ENCODE measurements at regions of chr3 and their contacts with region 1.

Region 1: GRCh38 chr3:196073188-196073838 is 8.6 kb downstream of the TFRC start:
- DNase-seq: peak; percentile 78
- H3K4me3 Mint-ChIP-seq: no peak overlapping the region
- H3K27ac Mint-ChIP-seq: no peak overlapping the region
- H3K4me1 Mint-ChIP-seq: peaks cover 10% of the 10 kb centered on the region
- H3K27me3 Mint-ChIP-seq: no peaks in the 10 kb centered on the region
- CTCF ChIP-seq: peak; percentile 65

Region 2: GRCh38 chr3:195859061-195859845 is 214.1 kb before region 1 on chr3:
- CTCF ChIA-PET with region 1: no interaction called
- POLR2A ChIA-PET with region 1: no interaction called
- intact Hi-C with region 1: no loop called
- DNase-seq: peak; percentile 75
- H3K4me3 Mint-ChIP-seq: no peak overlapping the region
- H3K27ac Mint-ChIP-seq: no peak overlapping the region
- H3K4me1 Mint-ChIP-seq: peaks cover 14% of the 10 kb centered on the region
- H3K27me3 Mint-ChIP-seq: no peaks in the 10 kb centered on the region
- CTCF ChIP-seq: peak; percentile 92

Region 3: DNA sequence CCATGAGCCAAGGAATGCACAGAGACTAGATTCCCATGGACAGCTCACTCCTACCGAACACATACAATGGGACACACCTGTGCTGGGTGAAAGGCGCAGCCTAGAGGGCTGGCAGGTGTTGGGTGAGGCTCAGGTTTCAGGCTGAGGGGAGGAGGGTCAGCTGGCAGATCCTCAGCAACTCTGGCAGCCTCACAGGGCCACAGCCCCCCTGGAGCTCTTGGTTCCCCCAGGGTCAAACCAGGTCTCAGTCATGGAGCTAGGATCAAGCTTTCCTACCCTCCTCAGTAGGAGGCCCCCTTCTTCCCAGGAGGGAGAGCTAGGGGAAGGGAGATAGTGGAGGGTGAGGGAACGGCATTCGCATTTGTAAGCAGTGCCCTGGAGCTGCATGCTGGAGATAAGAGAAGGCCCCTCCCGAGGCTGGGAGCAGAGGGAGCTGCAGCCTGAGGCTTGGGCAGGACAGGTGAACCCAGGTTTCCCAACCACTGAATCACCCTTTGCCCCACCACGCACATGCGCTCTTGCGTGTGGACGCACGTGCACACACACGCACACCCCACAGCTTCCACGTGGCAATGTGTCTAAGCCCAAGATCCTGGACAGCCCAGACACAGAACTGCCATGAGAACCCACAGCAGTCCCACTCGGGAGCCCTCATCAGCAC is 34.9 kb after region 1 on chr3:
- CTCF ChIA-PET with region 1: interaction called, 16 read pairs
- POLR2A ChIA-PET with region 1: interaction called, 5 read pairs
- intact Hi-C with region 1: no loop called
- DNase-seq: peak; percentile 69
- H3K4me3 Mint-ChIP-seq: no peak overlapping the region
- H3K27ac Mint-ChIP-seq: no peak overlapping the region
- H3K4me1 Mint-ChIP-seq: peaks cover 9% of the 10 kb centered on the region
- H3K27me3 Mint-ChIP-seq: no peaks in the 10 kb centered on the region
- CTCF ChIP-seq: no peak

Region 4: GRCh38 chr3:196180346-196180745 is 107.0 kb after region 1 on chr3:
- CTCF ChIA-PET with region 1: interaction called, 12 read pairs
- POLR2A ChIA-PET with region 1: no interaction called
- intact Hi-C with region 1: no loop called
- DNase-seq: no peak
- H3K4me3 Mint-ChIP-seq: no peak overlapping the region
- H3K27ac Mint-ChIP-seq: no peak overlapping the region
- H3K4me1 Mint-ChIP-seq: peaks cover 18% of the 10 kb centered on the region
- H3K27me3 Mint-ChIP-seq: no peaks in the 10 kb centered on the region
- CTCF ChIP-seq: no peak

Region 5: DNA sequence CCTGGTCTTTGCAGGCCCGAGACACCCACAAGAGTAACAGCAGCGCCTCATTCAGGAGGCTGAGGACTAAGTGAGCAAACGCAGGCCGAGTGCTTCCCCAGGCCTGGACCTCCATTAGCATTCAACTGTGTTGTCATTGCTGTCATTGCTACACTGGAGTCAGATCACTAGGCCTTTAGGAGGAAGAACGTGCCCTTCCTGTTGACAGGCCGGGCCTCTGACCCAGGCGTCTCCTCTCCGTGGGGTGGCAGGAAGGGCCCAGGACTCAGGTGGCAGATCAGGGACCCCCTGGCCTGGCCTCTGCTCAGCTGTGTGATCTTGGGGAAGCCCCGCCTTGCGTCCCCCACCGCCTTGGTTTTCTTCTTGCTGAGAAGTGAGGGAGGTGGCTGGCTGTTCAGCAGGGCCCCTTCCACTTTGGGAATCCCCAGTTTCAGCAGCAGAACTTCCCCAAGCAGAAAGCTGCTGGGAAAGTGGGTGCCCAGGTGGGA is 118.8 kb after region 1 on chr3:
- CTCF ChIA-PET with region 1: interaction called, 171 read pairs
- POLR2A ChIA-PET with region 1: interaction called, 3 read pairs
- intact Hi-C with region 1: loop called (anchors 1 kb)
- DNase-seq: no peak
- H3K4me3 Mint-ChIP-seq: no peak overlapping the region
- H3K27ac Mint-ChIP-seq: no peak overlapping the region
- H3K4me1 Mint-ChIP-seq: no peaks in the 10 kb centered on the region
- H3K27me3 Mint-ChIP-seq: no peaks in the 10 kb centered on the region
- CTCF ChIP-seq: no peak

Measured in MCF 10A (cell line).